MCF 10A (cell line): ENCODE measurements at regions of chr12 and their contacts with region 1.

Region 1: DNA sequence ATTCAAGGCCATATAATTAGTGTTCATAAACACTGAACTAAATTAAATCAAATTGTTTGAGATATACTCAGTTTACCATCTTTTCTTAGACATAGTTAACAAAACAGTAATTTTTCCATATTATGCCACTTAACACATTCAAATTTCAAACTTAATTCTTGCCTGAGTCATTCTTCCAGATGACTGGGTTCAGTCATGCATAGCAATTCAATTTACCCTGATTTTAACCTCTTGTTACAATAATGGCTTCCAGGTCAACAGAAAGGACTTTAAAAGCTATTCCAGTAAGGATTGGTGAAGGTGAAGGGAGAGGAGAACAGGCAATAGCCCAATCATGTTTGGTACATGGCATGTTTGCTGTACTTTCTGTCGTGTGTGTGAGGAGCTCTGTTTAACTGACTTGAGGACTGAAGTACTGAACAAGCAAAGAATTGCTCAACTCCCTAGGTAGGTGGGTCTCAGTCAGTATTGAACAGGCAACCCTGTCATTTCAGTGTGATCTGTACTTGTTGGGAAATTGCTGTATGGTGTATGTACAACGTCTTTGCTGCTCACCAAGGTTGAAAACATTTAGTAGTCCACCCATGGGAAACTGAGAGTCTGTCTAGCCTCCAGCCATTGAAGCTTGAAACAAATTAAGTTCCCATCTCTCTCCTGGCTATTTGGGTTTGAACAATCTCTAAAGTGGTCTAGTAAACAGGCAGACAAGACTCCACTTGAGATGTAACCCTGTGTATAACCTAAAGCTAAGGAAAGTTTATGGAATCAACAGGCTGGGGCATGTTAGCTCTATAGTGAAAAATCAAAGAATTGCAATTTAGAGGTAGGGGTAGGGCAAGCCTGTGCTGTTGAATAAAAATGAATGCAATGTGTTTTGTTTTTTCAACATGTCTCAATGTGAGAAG is 327.2 kb downstream of the BTG1 start:
- DNase-seq: peak; percentile 18
- H3K4me3 Mint-ChIP-seq: peak overlapping the region; percentile 8
- H3K27ac Mint-ChIP-seq: peak overlapping the region; percentile 42
- H3K4me1 Mint-ChIP-seq: peaks cover 31% of the 10 kb centered on the region
- H3K27me3 Mint-ChIP-seq: no peaks in the 10 kb centered on the region
- CTCF ChIP-seq: no peak

Region 2: GRCh38 chr12:91577586-91578539 is 240.6 kb before region 1 on chr12:
- CTCF ChIA-PET with region 1: interaction called, 3 read pairs
- POLR2A ChIA-PET with region 1: interaction called, 26 read pairs
- intact Hi-C with region 1: loop called (anchors 5 kb)
- DNase-seq: peak; percentile 32
- H3K4me3 Mint-ChIP-seq: peak overlapping the region; percentile 57
- H3K27ac Mint-ChIP-seq: peak overlapping the region; percentile 85
- H3K4me1 Mint-ChIP-seq: peaks cover 20% of the 10 kb centered on the region
- H3K27me3 Mint-ChIP-seq: no peaks in the 10 kb centered on the region
- CTCF ChIP-seq: peak; percentile 52

Region 3: DNA sequence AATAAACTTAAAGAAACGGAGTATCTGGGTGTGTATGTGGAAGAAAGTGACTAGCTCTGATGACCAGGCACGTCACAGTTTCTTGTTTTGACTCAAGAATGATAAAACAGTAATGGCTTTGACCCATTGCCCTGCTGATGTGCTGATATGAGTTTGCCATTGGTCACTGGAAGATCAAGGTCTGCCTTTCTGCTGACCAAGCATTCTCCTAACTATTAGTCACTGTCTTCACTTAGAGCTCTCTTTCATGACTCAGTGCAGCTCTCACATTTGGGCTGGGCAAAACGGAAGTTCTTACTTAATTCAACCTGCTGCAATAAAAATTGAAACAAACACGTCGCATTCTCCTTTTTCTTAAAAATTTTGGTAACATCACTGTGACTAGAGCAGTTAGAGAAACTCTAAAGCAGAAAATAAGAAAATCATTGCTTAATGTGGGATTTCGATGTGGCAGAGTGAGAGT is 39.5 kb before region 1 on chr12:
- CTCF ChIA-PET with region 1: interaction called, 3 read pairs
- POLR2A ChIA-PET with region 1: interaction called, 107 read pairs
- intact Hi-C with region 1: no loop called
- DNase-seq: peak; percentile 95
- H3K4me3 Mint-ChIP-seq: peak overlapping the region; percentile 65
- H3K27ac Mint-ChIP-seq: peak overlapping the region; percentile 88
- H3K4me1 Mint-ChIP-seq: peaks cover 39% of the 10 kb centered on the region
- H3K27me3 Mint-ChIP-seq: no peaks in the 10 kb centered on the region
- CTCF ChIP-seq: no peak

Region 4: DNA sequence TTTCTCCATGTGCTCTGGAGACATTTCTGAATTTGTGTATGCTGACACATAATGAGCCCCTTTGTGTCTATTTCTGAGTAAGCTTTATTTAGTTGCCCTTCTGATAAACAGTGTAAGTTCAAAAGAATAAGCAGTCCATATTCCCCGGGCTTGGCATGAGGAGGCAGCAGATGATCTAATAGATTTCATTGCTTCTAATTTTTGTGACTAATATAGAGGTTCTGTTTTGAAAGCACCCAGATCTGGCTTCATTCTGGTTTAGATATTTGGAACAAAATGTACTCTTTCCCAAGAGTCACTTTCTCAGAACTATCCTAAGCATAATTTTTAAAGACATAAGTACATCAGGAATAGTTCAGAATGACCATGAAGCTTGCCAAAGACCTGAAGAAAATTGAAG is 36.2 kb after region 1 on chr12:
- CTCF ChIA-PET with region 1: interaction called, 3 read pairs
- POLR2A ChIA-PET with region 1: interaction called, 38 read pairs
- intact Hi-C with region 1: no loop called
- DNase-seq: peak; percentile 26
- H3K4me3 Mint-ChIP-seq: peak overlapping the region; percentile 13
- H3K27ac Mint-ChIP-seq: peak overlapping the region; percentile 93
- H3K4me1 Mint-ChIP-seq: peaks cover 41% of the 10 kb centered on the region
- H3K27me3 Mint-ChIP-seq: no peaks in the 10 kb centered on the region
- CTCF ChIP-seq: no peak

Region 5: GRCh38 chr12:92028441-92028709 is 209.9 kb after region 1 on chr12:
- CTCF ChIA-PET with region 1: interaction called, 3 read pairs
- POLR2A ChIA-PET with region 1: interaction called, 32 read pairs
- intact Hi-C with region 1: no loop called
- DNase-seq: peak; percentile 85
- H3K4me3 Mint-ChIP-seq: no peak overlapping the region
- H3K27ac Mint-ChIP-seq: peak overlapping the region; percentile 65
- H3K4me1 Mint-ChIP-seq: peaks cover 49% of the 10 kb centered on the region
- H3K27me3 Mint-ChIP-seq: no peaks in the 10 kb centered on the region
- CTCF ChIP-seq: no peak

Region 6: GRCh38 chr12:92649511-92650227 is 831.2 kb after region 1 on chr12:
- CTCF ChIA-PET with region 1: interaction called, 3 read pairs
- POLR2A ChIA-PET with region 1: interaction called, 3 read pairs
- intact Hi-C with region 1: loop called (anchors 5 kb)
- DNase-seq: peak; percentile 88
- H3K4me3 Mint-ChIP-seq: peak overlapping the region; percentile 49
- H3K27ac Mint-ChIP-seq: no peak overlapping the region
- H3K4me1 Mint-ChIP-seq: peaks cover 17% of the 10 kb centered on the region
- H3K27me3 Mint-ChIP-seq: no peaks in the 10 kb centered on the region
- CTCF ChIP-seq: peak; percentile 67